ENCODE measurements at regions of chr6 and their contacts with region 1.

Region 1: DNA sequence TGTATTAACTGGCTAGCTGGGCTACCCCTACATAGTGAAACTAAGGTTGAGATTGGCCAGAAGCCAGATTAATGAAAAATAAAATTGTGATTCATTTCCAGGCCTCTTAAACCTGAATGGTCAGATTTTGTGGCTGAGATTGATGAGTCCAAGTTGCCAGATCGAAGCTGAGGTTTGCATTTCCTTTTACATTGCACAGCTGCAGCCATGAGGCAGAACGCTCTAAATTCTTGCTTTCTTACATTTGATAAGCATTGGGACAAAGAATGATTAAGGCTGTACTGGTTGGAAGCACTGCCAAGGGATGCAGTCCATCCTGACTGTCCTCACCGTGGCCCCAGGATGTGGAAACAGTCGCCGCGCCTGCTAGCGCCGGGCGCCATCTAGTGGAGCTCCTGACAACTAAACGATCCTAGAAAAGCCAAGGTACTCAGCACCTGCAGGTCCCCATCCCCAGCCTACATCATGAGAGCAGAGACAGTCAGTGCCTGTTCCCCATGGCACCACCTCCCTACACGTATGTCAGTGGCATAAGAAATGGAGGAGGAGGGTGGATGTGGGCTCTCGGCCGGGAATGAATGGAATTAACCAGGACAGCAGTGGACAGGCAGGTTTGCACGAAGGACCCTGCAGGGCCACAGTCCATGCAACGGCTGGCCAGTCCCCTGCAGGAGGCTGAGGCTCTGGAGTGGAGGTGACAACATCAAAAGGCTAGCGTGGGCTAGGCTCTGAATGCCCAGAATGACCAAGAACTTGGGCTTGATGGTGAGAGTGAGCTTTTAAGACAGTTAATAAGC is 19.0 kb downstream of the PXDC1 start:
- DNase-seq: peak; percentile 42 to 76 (median 62)
- ATAC-seq: peak; percentile 69 to 84
- H3K4me3 Mint-ChIP-seq: no peak overlapping the region
- H3K27ac Mint-ChIP-seq: peak overlapping the region in 3 of 10 donors; percentile 26 to 83 (median 37)
- H3K4me1 Mint-ChIP-seq: peaks cover 2 to 7% (median 2%) of the 10 kb centered on the region in 4 donors
- H3K27me3 Mint-ChIP-seq: peaks cover 8 to 33% (median 19%) of the 10 kb centered on the region in 5 donors

Region 2: DNA sequence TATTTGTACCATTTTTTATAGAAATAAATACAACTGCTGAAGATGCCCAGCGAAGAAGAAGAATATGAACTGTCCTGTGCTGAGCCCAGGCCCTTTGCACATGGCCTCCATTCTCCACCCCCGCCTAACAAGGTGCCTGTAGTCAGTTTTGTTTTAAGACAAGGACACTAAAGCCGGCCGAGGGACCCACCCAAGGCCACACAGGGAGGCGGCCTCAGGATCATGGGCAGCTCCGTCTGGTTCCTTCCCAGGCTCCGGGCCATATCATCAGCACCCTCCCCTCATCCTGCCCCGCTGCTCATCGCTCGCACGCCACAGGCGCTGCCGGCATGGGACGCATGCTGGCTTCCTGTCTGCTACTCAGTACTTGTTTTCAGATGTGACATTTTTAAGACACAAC is 452.5 kb before region 1 on chr6:
- POLR2A ChIA-PET with region 1: interaction called, 10 read pairs
- DNase-seq: no peak
- ATAC-seq: no peak
- H3K4me3 Mint-ChIP-seq: no peak overlapping the region
- H3K27ac Mint-ChIP-seq: no peak overlapping the region
- H3K4me1 Mint-ChIP-seq: peaks cover 0 to 15% (median 4%) of the 10 kb centered on the region in 4 donors
- H3K27me3 Mint-ChIP-seq: no peaks in the 10 kb centered on the region

Region 3: DNA sequence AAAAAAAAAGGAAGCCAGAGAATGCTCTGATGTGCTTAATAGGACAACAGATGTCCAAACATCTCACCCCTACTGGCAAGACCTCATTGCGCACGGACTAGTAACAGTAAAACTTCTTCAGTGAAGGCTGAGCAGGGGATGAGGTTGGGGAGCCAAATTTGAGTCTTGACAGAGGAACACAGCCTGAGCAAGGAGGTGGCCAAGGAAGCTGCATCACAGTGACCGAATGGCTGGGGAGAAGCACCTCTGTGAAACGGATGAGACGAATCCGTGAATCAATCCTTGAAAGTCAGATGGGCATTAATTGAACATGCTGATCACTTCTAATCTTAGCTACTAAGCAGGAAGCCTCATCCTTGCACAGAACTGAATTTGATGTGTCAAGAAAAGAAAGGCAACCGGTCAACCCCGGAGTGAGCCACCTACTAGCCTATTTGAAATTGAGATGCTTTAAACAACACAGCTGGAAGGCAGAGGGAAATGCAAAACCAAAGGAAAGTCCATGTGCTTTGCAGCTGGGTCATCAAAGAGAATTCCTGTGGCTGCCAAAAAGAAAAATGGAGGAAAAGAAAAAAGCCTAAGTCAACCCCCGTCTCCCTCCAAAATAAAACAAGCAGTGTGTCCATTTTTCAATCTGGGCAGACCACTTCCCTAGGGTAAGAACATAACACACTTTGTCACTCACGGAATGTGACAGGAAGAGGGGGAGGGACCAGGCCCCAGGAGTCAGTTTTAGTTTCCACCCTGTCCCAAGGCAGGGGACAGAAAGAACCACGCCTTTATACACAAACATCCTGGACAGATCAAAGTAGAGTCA is 10.5 kb before region 1 on chr6:
- POLR2A ChIA-PET with region 1: no interaction called
- DNase-seq: no peak
- ATAC-seq: no peak
- H3K4me3 Mint-ChIP-seq: no peak overlapping the region
- H3K27ac Mint-ChIP-seq: peak overlapping the region in 1 of 10 donors; percentile 24
- H3K4me1 Mint-ChIP-seq: peaks cover 0 to 41% (median 7%) of the 10 kb centered on the region in 4 donors
- H3K27me3 Mint-ChIP-seq: no peaks in the 10 kb centered on the region

Region 4: DNA sequence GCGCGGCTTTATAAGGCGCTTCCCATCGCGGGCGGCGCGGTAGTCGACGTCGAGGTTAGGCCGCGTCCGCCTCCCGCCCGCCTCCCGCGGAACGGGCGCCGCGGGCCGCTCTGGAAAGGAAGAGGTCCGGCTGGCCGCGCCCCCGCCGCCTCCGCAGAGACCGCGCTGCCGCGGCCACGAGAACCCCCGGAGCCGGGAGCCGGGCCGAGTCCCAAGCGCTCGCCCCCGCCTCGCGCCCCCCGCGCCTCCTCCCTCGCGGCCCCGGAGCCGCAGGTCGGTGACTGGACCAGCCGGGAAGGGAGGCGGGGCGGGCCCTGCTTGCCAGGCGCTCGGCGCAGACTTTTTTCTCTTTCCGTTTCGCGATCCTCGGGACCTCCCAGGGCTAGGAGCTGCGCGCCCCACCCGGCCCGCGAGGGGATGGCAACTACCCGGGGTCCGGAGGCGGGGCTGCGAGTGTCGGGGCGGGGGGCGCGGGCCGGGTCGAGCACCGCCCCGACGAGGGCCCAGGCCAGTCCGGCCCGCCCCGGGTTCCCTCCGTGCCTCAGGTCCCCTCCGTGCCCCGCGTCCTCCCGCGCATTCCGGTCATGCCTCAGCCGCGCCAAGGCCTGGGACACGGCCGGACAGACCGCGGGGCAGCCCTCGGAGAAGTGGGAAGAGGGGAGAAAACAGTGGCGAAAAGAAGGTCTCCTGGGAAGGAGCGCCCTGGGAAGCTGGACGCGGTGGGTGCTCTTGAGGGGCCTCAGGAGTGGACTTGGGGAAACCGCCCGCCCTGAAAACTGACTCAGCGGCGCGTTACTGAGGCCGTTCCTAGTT is 19.4 kb after region 1 on chr6:
- POLR2A ChIA-PET with region 1: no interaction called
- DNase-seq: peak; percentile 30 to 76 (median 48)
- ATAC-seq: peak; percentile 80 to 83
- H3K4me3 Mint-ChIP-seq: peak overlapping the region in 9 of 10 donors; percentile 26 to 80 (median 69)
- H3K27ac Mint-ChIP-seq: no peak overlapping the region
- H3K4me1 Mint-ChIP-seq: peaks cover 3 to 13% (median 4%) of the 10 kb centered on the region in 4 donors
- H3K27me3 Mint-ChIP-seq: peaks cover 18 to 50% (median 31%) of the 10 kb centered on the region in 5 donors